Calu3 (cell line): ENCODE measurements at regions of chr11 and their contacts with region 1.

Region 1: GRCh38 chr11:124644426-124645280 is 22.0 kb downstream of the TBRG1 start:
- DNase-seq: peak; percentile 37
- H3K4me3 Mint-ChIP-seq: peak overlapping the region; percentile 44
- H3K27ac Mint-ChIP-seq: no peak overlapping the region
- H3K4me1 Mint-ChIP-seq: peaks cover 7% of the 10 kb centered on the region
- H3K27me3 Mint-ChIP-seq: no peaks in the 10 kb centered on the region
- CTCF ChIP-seq: peak; percentile 55

Region 2: GRCh38 chr11:124586238-124586860 is 58.3 kb before region 1 on chr11:
- CTCF ChIA-PET with region 1: no interaction called
- intact Hi-C with region 1: no loop called
- DNase-seq: peak; percentile 36
- H3K4me3 Mint-ChIP-seq: no peak overlapping the region
- H3K27ac Mint-ChIP-seq: peak overlapping the region; percentile 38
- H3K4me1 Mint-ChIP-seq: no peaks in the 10 kb centered on the region
- H3K27me3 Mint-ChIP-seq: peaks cover 50% of the 10 kb centered on the region
- CTCF ChIP-seq: peak; percentile 40

Region 3: DNA sequence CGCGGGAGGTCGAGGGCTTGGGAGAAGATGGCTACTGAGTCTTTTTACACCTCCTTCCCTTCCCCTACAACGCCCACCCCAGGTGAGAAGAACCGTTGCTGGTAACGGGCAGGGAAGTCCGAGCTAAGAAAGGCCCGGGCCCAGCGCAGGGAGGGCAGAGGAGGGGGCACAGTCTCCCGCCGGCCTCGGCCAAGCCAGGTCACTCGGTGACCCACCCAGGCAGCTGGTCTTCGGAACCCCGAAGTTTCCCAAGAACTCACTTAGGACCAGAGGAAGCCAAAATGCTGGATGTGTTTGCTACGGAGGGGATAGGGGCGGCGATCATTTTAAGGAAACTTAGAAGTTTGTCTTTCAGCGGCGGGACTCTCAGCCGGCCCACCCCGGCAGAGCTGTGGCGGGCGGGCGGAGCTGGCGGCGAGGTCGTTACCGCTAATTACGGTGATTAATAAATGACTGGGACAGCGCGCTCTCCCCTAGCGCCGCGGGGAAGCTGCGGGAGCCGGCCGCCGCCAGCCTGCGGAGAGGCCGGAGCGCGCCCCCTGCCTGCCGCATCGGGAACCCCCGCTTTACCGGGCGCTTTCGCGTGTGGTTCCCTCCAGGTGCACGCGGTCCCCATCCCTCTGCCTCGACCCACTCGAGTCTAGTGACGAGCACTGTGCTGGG is 221.4 kb after region 1 on chr11:
- CTCF ChIA-PET with region 1: no interaction called
- intact Hi-C with region 1: loop called (anchors 2 kb)
- DNase-seq: peak; percentile 32
- H3K4me3 Mint-ChIP-seq: no peak overlapping the region
- H3K27ac Mint-ChIP-seq: no peak overlapping the region
- H3K4me1 Mint-ChIP-seq: peaks cover 31% of the 10 kb centered on the region
- H3K27me3 Mint-ChIP-seq: peaks cover 100% of the 10 kb centered on the region
- CTCF ChIP-seq: peak; percentile 41